Transverse colon (tissue), 4 donors: ENCODE measurements at regions of chr2 and their contacts with region 1.

Region 1: GRCh38 chr2:113756355-113757137 is at the start of gene SLC35F5:
- DNase-seq: peak; percentile 95
- H3K4me3 ChIP-seq: peak within 1 kb of the TSS; percentile 69 to 84 (median 84)
- H3K27ac ChIP-seq: peak within 1 kb of the TSS; percentile 93 to 97 (median 94)
- H3K4me1 ChIP-seq: peaks cover 6 to 36% (median 24%) of the 10 kb centered on the region in 4 donors
- H3K27me3 ChIP-seq: no peaks in the 10 kb centered on the region
- CTCF ChIP-seq: no peak
- EP300 ChIP-seq: no peak
- POLR2A ChIP-seq: peak; percentile 97
- total RNA-seq, gene SLC35F5: 83.2 to 165 (median 128) TPM

Region 2: DNA sequence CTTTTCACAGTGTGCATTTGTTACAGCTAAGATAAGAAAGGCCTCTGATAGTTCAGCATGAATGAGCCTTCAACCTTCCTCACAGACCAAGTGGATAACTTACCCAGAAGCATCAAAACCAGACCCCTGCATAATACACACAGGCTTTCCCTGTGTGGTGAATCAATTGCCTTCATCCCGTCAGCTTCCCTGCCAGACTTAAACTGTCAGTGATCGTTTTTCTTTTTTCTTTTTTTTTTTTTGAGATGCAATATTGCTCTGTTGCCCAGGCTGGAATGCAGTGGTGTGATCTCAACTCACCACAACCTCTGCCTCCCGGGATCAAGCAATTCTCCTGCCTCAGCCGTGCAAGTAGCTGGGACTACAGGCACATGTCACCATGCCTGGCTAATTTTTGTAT is 20.4 kb after region 1 on chr2:
- in situ Hi-C with region 1: no loop called
- intact Hi-C with region 1: no loop called
- DNase-seq: no peak
- H3K4me3 ChIP-seq: no peak overlapping the region
- H3K27ac ChIP-seq: peak overlapping the region; percentile 39 to 64 (median 59)
- H3K4me1 ChIP-seq: peaks cover 0 to 7% (median 2%) of the 10 kb centered on the region in 4 donors
- H3K27me3 ChIP-seq: no peaks in the 10 kb centered on the region
- CTCF ChIP-seq: no peak
- EP300 ChIP-seq: no peak
- POLR2A ChIP-seq: no peak

Region 3: DNA sequence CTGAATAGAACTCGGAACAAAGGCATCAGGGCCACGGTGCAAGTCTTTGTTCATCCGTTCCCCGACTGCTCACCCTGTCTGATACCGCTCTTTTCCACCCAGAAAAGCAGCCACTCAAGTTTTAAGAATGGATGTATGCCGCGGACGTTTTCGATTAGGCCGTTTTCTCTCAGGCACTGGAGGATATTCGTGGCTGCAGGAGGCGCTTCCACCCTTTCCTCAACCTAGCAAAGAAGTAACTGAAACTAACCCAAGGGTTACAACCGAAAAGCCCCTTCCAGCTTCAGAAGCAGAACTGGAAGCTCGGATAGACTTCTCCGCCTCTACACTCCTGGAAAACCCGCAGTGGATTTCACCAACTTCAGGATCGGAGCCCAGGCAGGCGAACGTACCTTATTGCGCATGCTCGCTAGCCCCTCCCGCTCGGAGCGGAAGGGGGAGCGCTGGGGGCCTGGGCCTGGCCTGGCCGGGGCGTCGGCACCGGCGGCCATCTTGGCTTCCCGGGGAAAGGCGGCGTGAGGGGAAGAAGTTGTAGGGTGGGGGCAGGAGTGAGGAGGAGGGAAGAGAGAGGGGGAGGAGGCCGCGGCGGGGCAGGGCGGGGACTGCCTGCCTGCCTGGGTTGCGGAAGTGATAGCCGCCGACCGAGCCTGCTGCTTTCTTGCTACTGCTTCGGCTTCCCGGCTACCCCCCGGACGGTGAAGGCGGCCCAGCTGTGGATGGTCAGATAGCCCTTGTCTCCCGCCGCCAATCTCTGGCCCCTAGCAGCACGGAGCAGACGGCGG is 133.1 kb after region 1 on chr2 and contains the start of gene ACTR3:
- in situ Hi-C with region 1: loop called in 2 of 4 experiments (anchors 5 to 10 kb)
- intact Hi-C with region 1: loop called (anchors 5 kb)
- DNase-seq: peak; percentile 99
- H3K4me3 ChIP-seq: peak within 1 kb of the TSS; percentile 71 to 96 (median 90)
- H3K27ac ChIP-seq: peak within 1 kb of the TSS; percentile 96 to 99 (median 98)
- H3K4me1 ChIP-seq: peaks cover 37 to 77% (median 51%) of the 10 kb centered on the region in 4 donors
- H3K27me3 ChIP-seq: no peaks in the 10 kb centered on the region
- CTCF ChIP-seq: no peak
- EP300 ChIP-seq: no peak
- POLR2A ChIP-seq: peak; percentile 90
- total RNA-seq, gene ACTR3: 68.8 to 143 (median 114) TPM

Region 4: DNA sequence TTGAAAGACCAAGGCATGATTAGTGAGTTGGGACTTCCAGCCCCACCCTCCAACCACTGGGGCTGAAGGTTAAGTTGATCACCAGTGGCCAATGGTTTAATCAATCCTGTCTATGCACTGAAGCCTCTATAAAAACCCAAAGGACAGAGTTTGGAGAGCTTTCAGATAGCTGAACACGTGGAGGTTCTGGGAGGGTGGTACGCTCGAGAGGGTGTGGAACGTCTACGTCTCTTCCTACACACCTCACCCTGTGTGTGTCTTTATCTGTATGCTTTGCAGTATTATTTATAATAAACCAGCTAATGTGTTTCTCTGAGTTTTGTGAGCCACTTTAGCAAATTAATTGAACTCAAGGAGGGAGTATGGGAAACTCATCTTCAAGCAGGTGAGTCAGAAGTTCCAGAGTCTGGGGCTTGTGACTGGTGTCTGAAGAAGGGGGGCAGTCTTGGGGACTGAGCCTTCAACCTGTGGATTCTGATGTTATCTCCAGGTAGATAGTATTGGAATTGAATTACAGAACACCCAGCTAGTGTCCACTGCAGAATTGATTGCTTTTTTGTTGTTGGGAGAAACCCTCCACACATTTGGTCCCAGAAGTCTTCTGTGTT is 153.7 kb after region 1 on chr2:
- in situ Hi-C with region 1: loop called in 1 of 4 experiments (anchors 25 kb)
- intact Hi-C with region 1: no loop called
- DNase-seq: no peak
- H3K4me3 ChIP-seq: no peak overlapping the region
- H3K27ac ChIP-seq: no peak overlapping the region
- H3K4me1 ChIP-seq: peaks cover 10 to 54% (median 19%) of the 10 kb centered on the region in 4 donors
- H3K27me3 ChIP-seq: no peaks in the 10 kb centered on the region
- CTCF ChIP-seq: no peak
- EP300 ChIP-seq: no peak
- POLR2A ChIP-seq: no peak

Region 5: DNA sequence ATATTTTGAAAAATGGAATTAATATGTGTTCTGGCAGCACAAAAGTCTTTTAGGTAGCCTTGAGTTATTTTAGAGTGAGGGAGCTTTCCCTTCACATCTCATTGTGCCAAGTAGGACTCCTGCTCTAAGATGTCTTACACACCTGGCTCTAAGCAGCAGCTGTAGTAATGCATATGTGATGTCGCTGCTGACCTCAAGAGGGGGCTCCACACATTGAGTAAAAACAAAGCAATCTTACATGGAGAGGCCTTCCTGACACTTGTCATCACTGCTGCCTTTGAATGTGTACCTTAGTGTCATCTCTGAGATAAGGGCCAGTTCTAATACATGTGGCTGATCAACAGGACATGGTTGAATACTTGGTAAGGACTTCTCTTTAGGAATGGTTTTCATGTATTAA is 209.1 kb after region 1 on chr2:
- in situ Hi-C with region 1: loop called in 1 of 4 experiments (anchors 25 kb)
- intact Hi-C with region 1: no loop called
- DNase-seq: no peak
- H3K4me3 ChIP-seq: no peak overlapping the region
- H3K27ac ChIP-seq: no peak overlapping the region
- H3K4me1 ChIP-seq: peaks cover 0 to 30% (median 9%) of the 10 kb centered on the region in 4 donors
- H3K27me3 ChIP-seq: no peaks in the 10 kb centered on the region
- CTCF ChIP-seq: peak; percentile 31 to 54 (median 39)
- EP300 ChIP-seq: no peak
- POLR2A ChIP-seq: no peak

Region 6: DNA sequence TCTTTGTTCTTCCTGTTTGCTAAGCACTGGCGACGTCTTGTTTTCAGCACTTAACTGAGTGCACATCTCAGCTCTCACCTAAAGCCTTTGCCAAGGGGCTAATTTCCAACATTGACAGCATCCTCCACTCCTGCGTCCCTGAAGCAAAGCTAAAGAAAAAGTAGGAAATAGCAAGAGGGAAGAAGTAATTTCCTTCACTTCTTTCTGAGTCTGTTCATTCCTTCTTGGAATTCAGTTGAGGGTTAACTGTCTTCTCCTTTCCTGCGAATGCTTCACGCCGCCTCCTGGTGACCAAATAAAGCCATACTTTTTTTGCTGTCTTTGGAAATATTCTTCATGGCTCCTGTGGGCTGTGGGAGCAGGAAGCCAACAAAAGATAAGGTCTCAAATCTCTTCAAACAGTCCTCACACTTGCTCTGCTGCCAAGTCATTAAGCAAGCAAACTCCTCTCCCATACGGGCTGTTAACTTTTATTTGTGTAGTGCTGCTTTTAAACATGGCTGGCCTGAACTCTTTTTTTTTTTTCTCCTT is 786.8 kb after region 1 on chr2:
- in situ Hi-C with region 1: loop called in 1 of 4 experiments (anchors 25 kb)
- intact Hi-C with region 1: no loop called
- DNase-seq: peak; percentile 39
- H3K4me3 ChIP-seq: no peak overlapping the region
- H3K27ac ChIP-seq: peak overlapping the region; percentile 54 to 79 (median 69)
- H3K4me1 ChIP-seq: peaks cover 0 to 41% (median 22%) of the 10 kb centered on the region in 4 donors
- H3K27me3 ChIP-seq: no peaks in the 10 kb centered on the region
- CTCF ChIP-seq: peak; percentile 11 to 50 (median 31)
- EP300 ChIP-seq: no peak
- POLR2A ChIP-seq: no peak